ENCODE measurements at regions of chr19 and their contacts with region 1.

Region 1: DNA sequence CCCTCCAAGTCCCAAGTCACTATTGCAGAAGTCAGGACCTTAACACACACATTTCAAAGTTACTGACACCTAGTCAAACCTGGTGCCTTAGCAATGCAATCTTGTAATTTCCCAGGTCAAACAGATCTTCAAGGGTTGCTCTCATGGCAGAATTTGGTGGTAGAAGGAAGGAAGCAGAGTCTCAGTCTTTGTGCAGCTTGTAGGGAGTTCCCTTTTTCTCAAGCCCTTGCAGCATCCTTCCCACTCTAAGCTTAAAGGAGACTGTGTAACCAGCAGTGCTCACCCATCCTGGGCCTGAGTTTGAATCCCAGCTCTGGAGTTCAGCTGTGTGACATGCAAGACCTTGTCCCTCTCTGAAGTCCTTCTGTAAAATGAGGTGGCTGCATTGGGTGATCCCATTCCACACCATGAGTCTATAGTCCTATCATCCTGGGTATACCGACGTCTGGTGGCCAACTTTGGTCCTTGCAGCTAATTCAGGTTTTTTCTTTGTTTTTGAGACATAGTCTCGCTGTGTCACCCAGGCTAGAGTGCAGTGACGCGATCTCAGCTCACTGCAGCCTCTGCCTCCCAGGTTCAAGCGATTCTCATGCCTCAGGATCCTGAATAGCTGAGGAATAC is 9.8 kb downstream of the SIGLEC10 start:
- DNase-seq: peak; percentile 56
- H3K4me3 Mint-ChIP-seq: no peak overlapping the region
- H3K27ac Mint-ChIP-seq: no peak overlapping the region
- H3K4me1 Mint-ChIP-seq: no peaks in the 10 kb centered on the region
- H3K27me3 Mint-ChIP-seq: peaks cover 15% of the 10 kb centered on the region

Region 2: DNA sequence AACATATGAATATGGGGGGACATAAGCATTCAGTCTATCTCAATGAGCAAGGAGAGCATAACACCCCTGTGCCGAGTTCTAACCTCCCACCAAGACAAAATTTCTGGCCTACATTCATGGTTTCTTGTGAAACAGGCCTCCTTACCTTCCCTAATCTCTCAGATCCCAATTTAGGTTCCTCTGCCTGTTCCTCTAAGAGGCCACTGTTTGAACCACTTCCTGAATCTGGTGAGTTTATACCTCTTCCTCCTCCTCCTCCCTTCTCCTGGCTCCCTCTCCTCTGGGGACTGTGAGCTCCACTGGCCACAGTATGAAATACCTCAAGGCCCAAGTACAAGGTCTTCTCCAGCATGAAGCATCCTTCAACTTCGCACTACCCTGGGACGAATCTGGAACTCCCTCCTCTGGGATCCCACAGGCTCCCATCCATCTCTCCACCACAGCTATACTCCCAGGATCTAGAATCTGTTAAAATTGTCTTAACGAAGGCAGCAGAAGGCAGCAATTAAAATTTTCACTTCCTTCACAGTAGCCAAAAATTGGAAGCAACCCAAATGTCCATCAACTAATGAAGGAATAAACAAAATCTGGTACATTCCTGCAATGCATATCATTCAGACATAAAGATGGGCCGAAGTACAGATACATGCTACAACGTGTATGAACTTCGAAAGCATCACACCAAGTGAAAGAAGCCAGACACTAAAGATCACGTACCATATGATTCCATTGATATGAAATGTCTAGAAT is 164.6 kb before region 1 on chr19:
- CTCF ChIA-PET with region 1: no interaction called
- intact Hi-C with region 1: loop called (anchors 5 kb)
- DNase-seq: no peak
- H3K4me3 Mint-ChIP-seq: no peak overlapping the region
- H3K27ac Mint-ChIP-seq: no peak overlapping the region
- H3K4me1 Mint-ChIP-seq: peaks cover 5% of the 10 kb centered on the region
- H3K27me3 Mint-ChIP-seq: peaks cover 9% of the 10 kb centered on the region

Region 3: GRCh38 chr19:51311351-51312257 is 96.0 kb before region 1 on chr19 and contains the start of gene IGLON5:
- CTCF ChIA-PET with region 1: no interaction called
- intact Hi-C with region 1: no loop called
- DNase-seq: no peak
- H3K4me3 Mint-ChIP-seq: no peak within 1 kb of the TSS
- H3K27ac Mint-ChIP-seq: no peak within 1 kb of the TSS
- H3K4me1 Mint-ChIP-seq: no peaks in the 10 kb centered on the region
- H3K27me3 Mint-ChIP-seq: peaks cover 52% of the 10 kb centered on the region
- total RNA-seq, gene IGLON5: not detected